ENCODE measurements at regions of chr2 and their contacts with region 1.

Region 1: GRCh38 chr2:219104107-219105035 is 43.6 kb upstream of the IHH start:
- DNase-seq: peak; percentile 35
- H3K4me3 ChIP-seq: no peak overlapping the region
- H3K27ac ChIP-seq: no peak overlapping the region
- H3K4me1 ChIP-seq: no peaks in the 10 kb centered on the region
- H3K27me3 ChIP-seq: no peaks in the 10 kb centered on the region
- CTCF ChIP-seq: peak; percentile 84 to 86
- POLR2A ChIP-seq: no peak

Region 2: GRCh38 chr2:218995972-218996711 is 108.2 kb before region 1 on chr2:
- CTCF ChIA-PET with region 1: interaction called, 11 read pairs
- POLR2A ChIA-PET with region 1: no interaction called
- dilution Hi-C with region 1: no loop called
- intact Hi-C with region 1: no loop called
- DNase-seq: peak; percentile 65
- H3K4me3 ChIP-seq: no peak overlapping the region
- H3K27ac ChIP-seq: no peak overlapping the region
- H3K4me1 ChIP-seq: peaks cover 5% of the 10 kb centered on the region
- H3K27me3 ChIP-seq: peaks cover 79 to 83% of the 10 kb centered on the region in 2 experiments
- CTCF ChIP-seq: peak; percentile 73 to 94
- POLR2A ChIP-seq: no peak

Region 3: GRCh38 chr2:219057709-219058540 is 46.4 kb before region 1 on chr2:
- CTCF ChIA-PET with region 1: interaction called, 35 read pairs
- POLR2A ChIA-PET with region 1: no interaction called
- dilution Hi-C with region 1: no loop called
- intact Hi-C with region 1: loop called (anchors 2 kb)
- DNase-seq: peak; percentile 60
- H3K4me3 ChIP-seq: no peak overlapping the region
- H3K27ac ChIP-seq: no peak overlapping the region
- H3K4me1 ChIP-seq: no peaks in the 10 kb centered on the region
- H3K27me3 ChIP-seq: peaks cover 52 to 66% of the 10 kb centered on the region in 2 experiments
- CTCF ChIP-seq: peak; percentile 85 to 94
- POLR2A ChIP-seq: no peak

Region 4: DNA sequence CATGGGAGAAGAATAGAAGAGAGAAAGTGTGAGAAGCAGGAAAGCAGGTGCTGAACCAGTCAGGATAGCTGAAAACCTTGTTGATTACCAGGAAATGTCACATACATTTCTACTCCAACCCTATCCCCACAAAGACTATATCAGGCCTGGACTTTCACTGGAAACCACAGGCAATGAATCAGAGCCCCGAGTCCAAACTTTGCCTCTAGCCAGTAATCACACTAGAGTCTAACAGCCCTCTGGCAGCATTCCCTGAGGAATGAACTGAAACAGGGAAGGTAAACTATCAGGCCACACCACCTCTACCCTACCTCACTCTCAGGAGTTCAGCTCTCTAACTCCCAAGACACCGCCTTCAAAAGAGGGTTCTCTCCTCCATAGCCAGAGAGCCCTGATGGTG is 25.0 kb before region 1 on chr2:
- CTCF ChIA-PET with region 1: interaction called, 68 read pairs
- POLR2A ChIA-PET with region 1: no interaction called
- dilution Hi-C with region 1: no loop called
- intact Hi-C with region 1: no loop called
- DNase-seq: no peak
- H3K4me3 ChIP-seq: no peak overlapping the region
- H3K27ac ChIP-seq: no peak overlapping the region
- H3K4me1 ChIP-seq: no peaks in the 10 kb centered on the region
- H3K27me3 ChIP-seq: no peaks in the 10 kb centered on the region
- CTCF ChIP-seq: no peak
- POLR2A ChIP-seq: no peak

Region 5: GRCh38 chr2:219125225-219125885 is 21.0 kb after region 1 on chr2:
- CTCF ChIA-PET with region 1: interaction called, 51 read pairs
- POLR2A ChIA-PET with region 1: no interaction called
- dilution Hi-C with region 1: no loop called
- intact Hi-C with region 1: no loop called
- DNase-seq: no peak
- H3K4me3 ChIP-seq: no peak overlapping the region
- H3K27ac ChIP-seq: no peak overlapping the region
- H3K4me1 ChIP-seq: no peaks in the 10 kb centered on the region
- H3K27me3 ChIP-seq: no peaks in the 10 kb centered on the region
- CTCF ChIP-seq: no peak
- POLR2A ChIP-seq: no peak

Measured in endothelial cell of umbilical vein (primary cell).